ENCODE measurements at regions of chr17 and their contacts with region 1.

Region 1: GRCh38 chr17:9522074-9522473 is 53.5 kb downstream of the STX8 start:
- DNase-seq: no peak
- H3K4me3 Mint-ChIP-seq: no peak overlapping the region
- H3K27ac Mint-ChIP-seq: no peak overlapping the region
- H3K4me1 Mint-ChIP-seq: peaks cover 12% of the 10 kb centered on the region
- H3K27me3 Mint-ChIP-seq: no peaks in the 10 kb centered on the region

Region 2: DNA sequence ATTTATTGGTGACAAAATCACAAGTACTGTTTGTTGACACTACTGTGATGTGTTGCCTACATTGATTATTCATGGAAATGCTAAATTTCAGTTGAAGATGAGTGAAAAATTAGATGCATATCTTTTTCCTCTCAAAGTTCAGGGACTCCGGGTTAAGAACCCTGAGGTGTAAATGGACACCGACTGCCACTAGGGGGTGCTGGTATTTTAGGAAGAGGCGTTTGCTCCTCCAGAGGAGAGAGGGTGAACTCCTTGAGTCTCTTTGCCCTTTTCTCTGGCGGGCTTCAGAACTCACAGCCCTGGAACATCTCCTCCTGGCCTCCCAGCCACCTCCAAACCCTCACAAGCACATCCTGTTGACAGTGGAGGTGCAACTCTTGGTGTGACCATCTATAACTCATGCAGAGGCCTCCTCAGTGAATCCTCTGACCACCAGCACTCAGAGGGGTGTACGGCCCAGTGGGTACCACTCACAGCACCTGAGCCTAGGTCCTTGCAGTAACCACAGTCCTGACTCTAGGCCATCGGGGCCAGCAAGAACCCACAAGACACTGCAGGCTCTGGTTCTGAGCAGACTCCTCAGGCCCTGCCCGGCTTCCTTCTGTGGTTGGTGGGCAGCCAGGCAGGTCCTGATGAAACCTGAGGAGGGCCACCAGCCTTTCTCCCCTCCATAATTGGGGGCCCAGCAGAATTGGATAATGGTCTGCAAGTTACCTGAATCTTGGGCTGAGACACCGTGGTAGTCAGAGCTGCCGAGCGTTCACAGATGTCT is 530.4 kb before region 1 on chr17:
- intact Hi-C with region 1: loop called (anchors 5 kb)
- DNase-seq: peak; percentile 29
- H3K4me3 Mint-ChIP-seq: no peak overlapping the region
- H3K27ac Mint-ChIP-seq: no peak overlapping the region
- H3K4me1 Mint-ChIP-seq: peaks cover 4% of the 10 kb centered on the region
- H3K27me3 Mint-ChIP-seq: peaks cover 3% of the 10 kb centered on the region

Region 3: DNA sequence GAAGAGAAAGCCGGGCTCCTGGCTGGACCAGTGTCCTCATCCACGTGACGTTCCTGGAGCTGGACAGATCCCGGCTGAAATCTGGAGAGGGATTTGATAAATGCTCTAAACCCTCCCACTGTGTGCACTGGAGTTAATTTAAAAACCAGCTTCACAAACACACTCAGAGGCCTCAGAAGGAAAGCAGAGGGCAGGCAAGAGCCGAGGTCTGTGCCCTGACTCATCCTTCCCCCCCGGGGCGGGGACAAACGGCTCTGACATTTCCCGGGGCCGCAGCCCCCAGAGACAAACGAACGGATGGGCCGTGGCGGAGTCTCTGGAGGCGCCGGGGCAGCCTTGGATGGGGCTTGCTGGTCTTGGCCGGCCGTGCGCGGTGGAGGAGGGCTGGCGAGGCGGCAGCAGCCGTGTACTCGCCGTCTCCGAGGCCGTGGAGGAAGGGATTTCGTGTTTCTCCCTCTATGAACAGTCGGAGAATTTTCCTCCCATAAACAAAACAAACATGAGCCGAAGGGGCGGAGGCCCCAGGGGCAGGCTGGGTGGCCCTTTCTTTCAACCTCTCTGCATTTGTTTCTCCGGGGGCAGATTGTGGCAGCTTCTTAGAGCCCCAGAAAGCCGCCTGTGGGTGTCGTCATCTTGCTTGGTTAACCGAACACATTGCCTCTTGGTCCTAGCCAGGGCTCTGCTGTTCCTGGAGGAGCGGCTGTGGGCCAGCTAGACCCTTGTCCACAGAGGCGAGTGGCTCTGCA is 406.5 kb before region 1 on chr17:
- intact Hi-C with region 1: loop called (anchors 10 kb)
- DNase-seq: peak; percentile 9
- H3K4me3 Mint-ChIP-seq: peak overlapping the region; percentile 66
- H3K27ac Mint-ChIP-seq: no peak overlapping the region
- H3K4me1 Mint-ChIP-seq: peaks cover 11% of the 10 kb centered on the region
- H3K27me3 Mint-ChIP-seq: peaks cover 5% of the 10 kb centered on the region

Region 4: GRCh38 chr17:9402590-9403199 is 119.4 kb before region 1 on chr17:
- intact Hi-C with region 1: loop called (anchors 1 kb)
- DNase-seq: peak; percentile 9
- H3K4me3 Mint-ChIP-seq: no peak overlapping the region
- H3K27ac Mint-ChIP-seq: no peak overlapping the region
- H3K4me1 Mint-ChIP-seq: no peaks in the 10 kb centered on the region
- H3K27me3 Mint-ChIP-seq: no peaks in the 10 kb centered on the region